ENCODE measurements at regions of chr18 and their contacts with region 1.

Region 1: DNA sequence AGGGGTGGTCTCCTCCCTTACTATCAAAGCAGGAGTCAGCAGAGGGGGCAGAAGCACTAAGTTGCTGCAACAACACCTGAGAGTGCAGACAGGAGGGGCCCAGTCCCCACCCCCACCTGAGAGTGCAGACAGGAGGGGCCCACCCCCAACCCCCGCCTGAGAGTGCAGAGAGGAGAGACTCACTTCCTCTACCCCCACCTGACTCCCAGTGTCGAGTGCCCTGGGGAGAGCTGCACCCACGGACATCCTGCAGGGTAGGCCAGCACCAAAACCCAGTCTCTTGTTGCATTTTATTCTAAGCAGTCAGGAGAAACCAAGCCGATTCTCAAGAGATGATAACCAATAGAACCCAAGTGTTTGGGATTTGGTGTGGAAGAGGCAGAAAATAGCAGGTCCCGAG is 78.4 kb downstream of the NAPG start:
- DNase-seq: no peak
- H3K4me3 ChIP-seq: no peak overlapping the region
- H3K27ac ChIP-seq: no peak overlapping the region
- H3K4me1 ChIP-seq: no peaks in the 10 kb centered on the region
- H3K27me3 ChIP-seq: no peaks in the 10 kb centered on the region

Region 2: GRCh38 chr18:12233378-12233777 is 1629.2 kb after region 1 on chr18:
- in situ Hi-C with region 1: loop called (anchors 5 kb)
- DNase-seq: no peak
- H3K4me3 ChIP-seq: no peak overlapping the region
- H3K27ac ChIP-seq: no peak overlapping the region
- H3K4me1 ChIP-seq: peaks cover under 1% of the 10 kb centered on the region; the same call in 1 of the 2 replicates
- H3K27me3 ChIP-seq: no peaks in the 10 kb centered on the region